Left ventricle myocardium inferior (tissue), 1 donor: ENCODE measurements at regions of chr7 and their contacts with region 1.

Region 1: GRCh38 chr7:38107486-38107893 is 70.6 kb upstream of the STARD3NL start:
- DNase-seq: peak; percentile 17
- H3K4me3 ChIP-seq: no peak overlapping the region
- H3K27ac ChIP-seq: no peak overlapping the region
- H3K4me1 ChIP-seq: no peaks in the 10 kb centered on the region
- H3K27me3 ChIP-seq: no peaks in the 10 kb centered on the region
- CTCF ChIP-seq: peak; percentile 84

Region 2: GRCh38 chr7:37901236-37901827 is 206.2 kb before region 1 on chr7:
- intact Hi-C with region 1: loop called (anchors 10 kb)
- DNase-seq: no peak
- H3K4me3 ChIP-seq: no peak overlapping the region
- H3K27ac ChIP-seq: no peak overlapping the region
- H3K4me1 ChIP-seq: peaks cover 12% of the 10 kb centered on the region
- H3K27me3 ChIP-seq: peaks cover 5% of the 10 kb centered on the region
- CTCF ChIP-seq: peak; percentile 66

Region 3: GRCh38 chr7:38147005-38147404 is 39.5 kb after region 1 on chr7:
- intact Hi-C with region 1: no loop called
- DNase-seq: no peak
- H3K4me3 ChIP-seq: no peak overlapping the region
- H3K27ac ChIP-seq: no peak overlapping the region
- H3K4me1 ChIP-seq: no peaks in the 10 kb centered on the region
- H3K27me3 ChIP-seq: no peaks in the 10 kb centered on the region
- CTCF ChIP-seq: no peak

Region 4: DNA sequence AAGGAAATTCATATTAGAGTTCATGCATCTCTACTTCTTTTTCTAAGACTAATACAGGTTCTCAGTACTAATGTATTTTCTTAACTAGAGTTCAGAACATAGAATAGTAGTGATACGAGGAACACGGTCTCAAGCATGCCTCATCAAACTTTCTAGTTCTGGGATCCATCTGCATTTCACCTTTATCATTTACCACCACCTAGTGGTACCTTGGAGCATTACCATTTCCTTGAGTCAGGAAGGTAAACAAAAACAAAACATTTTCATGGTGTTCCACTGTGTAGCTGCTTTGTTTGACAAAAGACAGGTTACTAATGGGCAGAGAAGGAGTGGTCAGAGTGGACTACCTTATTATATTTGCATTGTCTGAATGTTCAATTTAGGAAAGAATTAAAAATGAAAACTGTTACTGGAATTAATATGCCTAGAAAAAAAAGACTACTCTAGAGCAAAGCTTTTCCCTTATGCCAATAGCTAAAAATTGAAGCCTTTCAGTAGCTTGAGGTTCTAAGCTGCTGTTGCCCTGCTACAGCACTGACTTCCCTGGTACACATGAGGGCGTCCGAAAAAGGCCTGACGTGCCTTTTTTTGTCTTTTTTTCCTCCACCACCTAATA is 115.1 kb after region 1 on chr7:
- intact Hi-C with region 1: loop called (anchors 2 kb)
- DNase-seq: no peak
- H3K4me3 ChIP-seq: no peak overlapping the region
- H3K27ac ChIP-seq: no peak overlapping the region
- H3K4me1 ChIP-seq: peaks cover 10% of the 10 kb centered on the region
- H3K27me3 ChIP-seq: no peaks in the 10 kb centered on the region
- CTCF ChIP-seq: peak; percentile 93

Region 5: GRCh38 chr7:38318803-38319416 is 211.4 kb after region 1 on chr7:
- intact Hi-C with region 1: loop called (anchors 5 kb)
- DNase-seq: no peak
- H3K4me3 ChIP-seq: no peak overlapping the region
- H3K27ac ChIP-seq: no peak overlapping the region
- H3K4me1 ChIP-seq: no peaks in the 10 kb centered on the region
- H3K27me3 ChIP-seq: no peaks in the 10 kb centered on the region
- CTCF ChIP-seq: peak; percentile 63